B cell (primary cell): ENCODE measurements at regions of chr12 and their contacts with region 1.

Region 1: DNA sequence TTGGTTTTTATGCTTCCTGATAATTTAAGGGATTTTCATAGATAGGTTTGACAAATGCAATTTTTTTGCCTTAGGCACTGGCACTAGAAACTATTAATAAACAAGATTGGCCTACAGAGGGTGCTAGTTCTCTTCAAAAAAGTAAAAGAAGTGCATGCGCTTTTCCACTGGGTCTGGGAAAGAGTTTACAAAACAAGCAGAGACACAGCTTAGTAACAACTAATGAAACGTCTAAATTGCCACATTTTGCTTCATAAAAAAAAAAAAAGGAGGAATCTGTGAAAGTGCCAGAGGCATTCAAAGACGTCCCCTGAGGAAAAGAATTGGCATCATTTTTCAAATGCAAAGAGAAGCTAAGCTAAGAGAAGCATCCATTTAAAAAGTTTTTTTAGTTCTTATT is 58.3 kb upstream of the EEA1 start:
- DNase-seq: peak; percentile 72
- ATAC-seq: peak; percentile 37
- H3K4me3 ChIP-seq: peak overlapping the region in 4 of 5 experiments; percentile 12 to 57 (median 34)
- H3K4me3 Mint-ChIP-seq: peak overlapping the region; percentile 80
- H3K27ac ChIP-seq: peak overlapping the region; percentile 66 to 77
- H3K27ac Mint-ChIP-seq: peak overlapping the region; percentile 92
- H3K4me1 ChIP-seq: peaks cover 21 to 31% of the 10 kb centered on the region in 2 donors
- H3K4me1 Mint-ChIP-seq: peaks cover 30% of the 10 kb centered on the region
- H3K27me3 ChIP-seq: no peaks in the 10 kb centered on the region
- H3K27me3 Mint-ChIP-seq: no peaks in the 10 kb centered on the region
- CTCF ChIP-seq: peak; percentile 81

Region 2: GRCh38 chr12:92973601-92974000 is 13.8 kb before region 1 on chr12:
- CTCF ChIA-PET with region 1: interaction called, 54 read pairs
- POLR2A ChIA-PET with region 1: interaction called, 4 read pairs
- intact Hi-C with region 1: loop called (anchors 2 kb)
- DNase-seq: no peak
- ATAC-seq: no peak
- H3K4me3 ChIP-seq: no peak overlapping the region
- H3K4me3 Mint-ChIP-seq: peak overlapping the region; percentile 50
- H3K27ac ChIP-seq: no peak overlapping the region
- H3K27ac Mint-ChIP-seq: peak overlapping the region; percentile 73
- H3K4me1 ChIP-seq: peaks cover 25 to 48% of the 10 kb centered on the region in 2 donors
- H3K4me1 Mint-ChIP-seq: peaks cover 56% of the 10 kb centered on the region
- H3K27me3 ChIP-seq: no peaks in the 10 kb centered on the region
- H3K27me3 Mint-ChIP-seq: no peaks in the 10 kb centered on the region
- CTCF ChIP-seq: no peak

Region 3: DNA sequence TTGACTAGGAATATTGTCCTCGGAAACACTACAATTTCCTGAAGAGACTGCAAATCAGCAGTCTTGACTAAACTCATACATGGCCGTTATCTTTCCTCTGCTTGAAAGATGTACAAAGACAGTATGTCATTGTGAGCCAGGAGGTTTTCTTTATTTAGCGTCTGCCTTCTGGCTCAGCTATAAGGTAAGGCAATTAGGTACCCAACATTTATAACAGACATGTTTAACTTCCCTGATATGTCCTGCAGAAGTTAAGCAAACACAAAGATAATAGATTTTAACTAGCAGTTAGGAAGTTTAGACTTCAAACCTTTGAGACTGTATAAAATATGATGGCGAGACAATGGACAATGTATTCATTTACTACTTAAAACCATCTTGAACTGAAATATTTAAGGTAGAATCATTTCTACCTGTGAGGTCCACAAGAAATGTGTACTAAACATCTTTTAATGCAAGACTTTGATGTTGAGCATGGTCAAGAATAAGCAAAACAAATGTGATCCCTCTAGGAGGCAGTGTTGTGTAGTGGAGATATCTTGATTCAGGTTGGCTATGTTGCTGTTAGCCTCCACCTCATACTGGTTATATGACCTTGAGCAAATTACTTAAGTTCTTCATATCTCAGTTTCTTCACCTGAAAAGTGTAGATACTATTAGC is 37.9 kb after region 1 on chr12:
- CTCF ChIA-PET with region 1: interaction called, 4 read pairs
- POLR2A ChIA-PET with region 1: no interaction called
- intact Hi-C with region 1: loop called (anchors 5 kb)
- DNase-seq: peak; percentile 56
- ATAC-seq: peak; percentile 45
- H3K4me3 ChIP-seq: no peak overlapping the region
- H3K4me3 Mint-ChIP-seq: no peak overlapping the region
- H3K27ac ChIP-seq: no peak overlapping the region
- H3K27ac Mint-ChIP-seq: no peak overlapping the region
- H3K4me1 ChIP-seq: no peaks in the 10 kb centered on the region
- H3K4me1 Mint-ChIP-seq: no peaks in the 10 kb centered on the region
- H3K27me3 ChIP-seq: no peaks in the 10 kb centered on the region
- H3K27me3 Mint-ChIP-seq: no peaks in the 10 kb centered on the region
- CTCF ChIP-seq: peak; percentile 51

Region 4: GRCh38 chr12:93089805-93090569 is 102.6 kb after region 1 on chr12:
- CTCF ChIA-PET with region 1: no interaction called
- POLR2A ChIA-PET with region 1: no interaction called
- intact Hi-C with region 1: no loop called
- DNase-seq: no peak
- ATAC-seq: no peak
- H3K4me3 ChIP-seq: no peak overlapping the region
- H3K4me3 Mint-ChIP-seq: no peak overlapping the region
- H3K27ac ChIP-seq: no peak overlapping the region
- H3K27ac Mint-ChIP-seq: no peak overlapping the region
- H3K4me1 ChIP-seq: peaks cover 2% of the 10 kb centered on the region in 2 donors
- H3K4me1 Mint-ChIP-seq: peaks cover 3% of the 10 kb centered on the region
- H3K27me3 ChIP-seq: no peaks in the 10 kb centered on the region
- H3K27me3 Mint-ChIP-seq: no peaks in the 10 kb centered on the region
- CTCF ChIP-seq: no peak

Region 5: GRCh38 chr12:93347054-93347776 is 359.9 kb after region 1 on chr12:
- CTCF ChIA-PET with region 1: no interaction called
- POLR2A ChIA-PET with region 1: no interaction called
- intact Hi-C with region 1: no loop called
- DNase-seq: no peak
- ATAC-seq: no peak
- H3K4me3 ChIP-seq: no peak overlapping the region
- H3K4me3 Mint-ChIP-seq: no peak overlapping the region
- H3K27ac ChIP-seq: no peak overlapping the region
- H3K27ac Mint-ChIP-seq: no peak overlapping the region
- H3K4me1 ChIP-seq: no peaks in the 10 kb centered on the region
- H3K4me1 Mint-ChIP-seq: no peaks in the 10 kb centered on the region
- H3K27me3 ChIP-seq: no peaks in the 10 kb centered on the region
- H3K27me3 Mint-ChIP-seq: no peaks in the 10 kb centered on the region
- CTCF ChIP-seq: no peak

Region 6: DNA sequence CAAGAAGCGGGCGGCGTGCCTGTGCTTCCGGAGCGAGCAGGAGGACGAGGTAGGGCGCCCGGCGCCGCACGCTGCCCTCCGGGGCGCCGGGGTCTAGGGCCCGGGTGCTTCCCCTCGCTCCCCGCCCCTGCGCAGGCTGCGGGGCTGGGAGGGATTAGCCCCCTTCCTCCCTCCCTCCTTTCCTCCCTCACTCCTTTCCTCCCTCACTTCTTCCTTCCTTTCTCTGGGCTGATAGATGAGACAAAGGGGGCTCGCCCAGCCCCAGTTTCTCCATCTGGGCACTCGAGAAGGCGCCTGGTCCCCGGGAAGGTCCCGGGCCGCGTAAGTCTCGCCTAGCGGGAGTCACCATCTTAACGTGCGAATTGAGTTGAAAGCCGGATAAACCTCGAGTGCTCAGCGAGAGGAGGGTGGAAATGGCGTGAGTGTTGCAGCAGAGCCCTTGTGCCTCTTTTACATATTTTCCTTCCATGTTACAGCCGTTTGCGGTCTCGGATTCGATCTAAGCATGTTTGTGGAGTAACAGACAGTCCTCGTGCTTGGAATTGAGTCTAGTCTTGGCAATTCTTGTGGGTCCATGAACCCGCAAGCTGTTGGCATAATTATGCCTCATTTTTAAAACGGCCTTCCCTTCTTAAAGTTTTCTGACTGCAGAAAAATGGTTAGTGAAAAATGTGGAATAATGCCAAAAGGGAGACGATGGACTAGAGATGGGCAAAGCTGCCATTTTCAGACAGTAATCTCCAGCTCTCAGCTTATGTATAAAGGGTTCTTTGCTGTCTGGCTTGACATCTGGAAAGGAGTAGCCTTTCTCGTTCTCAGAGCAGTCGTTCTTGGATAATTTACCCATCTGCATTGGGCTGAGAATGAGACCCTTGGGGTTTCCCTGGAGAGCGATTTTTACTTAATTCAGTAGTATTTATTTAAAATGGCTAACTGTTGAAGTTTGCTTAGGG is 391.3 kb after region 1 on chr12:
- CTCF ChIA-PET with region 1: interaction called, 70 read pairs
- POLR2A ChIA-PET with region 1: no interaction called
- intact Hi-C with region 1: loop called (anchors 1 kb)
- DNase-seq: peak; percentile 76
- ATAC-seq: peak; percentile 44
- H3K4me3 ChIP-seq: peak overlapping the region; percentile 73 to 96 (median 86)
- H3K4me3 Mint-ChIP-seq: peak overlapping the region; percentile 98
- H3K27ac ChIP-seq: peak overlapping the region; percentile 75 to 89
- H3K27ac Mint-ChIP-seq: peak overlapping the region; percentile 98
- H3K4me1 ChIP-seq: peaks cover 20 to 29% of the 10 kb centered on the region in 2 donors
- H3K4me1 Mint-ChIP-seq: peaks cover 40% of the 10 kb centered on the region
- H3K27me3 ChIP-seq: no peaks in the 10 kb centered on the region
- H3K27me3 Mint-ChIP-seq: no peaks in the 10 kb centered on the region
- CTCF ChIP-seq: no peak

Region 7: GRCh38 chr12:93403988-93404803 is 416.8 kb after region 1 on chr12:
- CTCF ChIA-PET with region 1: interaction called, 93 read pairs
- POLR2A ChIA-PET with region 1: no interaction called
- intact Hi-C with region 1: no loop called
- DNase-seq: no peak
- ATAC-seq: no peak
- H3K4me3 ChIP-seq: no peak overlapping the region
- H3K4me3 Mint-ChIP-seq: no peak overlapping the region
- H3K27ac ChIP-seq: no peak overlapping the region
- H3K27ac Mint-ChIP-seq: peak overlapping the region; percentile 37
- H3K4me1 ChIP-seq: no peaks in the 10 kb centered on the region
- H3K4me1 Mint-ChIP-seq: no peaks in the 10 kb centered on the region
- H3K27me3 ChIP-seq: no peaks in the 10 kb centered on the region
- H3K27me3 Mint-ChIP-seq: no peaks in the 10 kb centered on the region
- CTCF ChIP-seq: no peak

Region 8: GRCh38 chr12:93502802-93503623 is 515.7 kb after region 1 on chr12:
- CTCF ChIA-PET with region 1: interaction called, 14 read pairs
- POLR2A ChIA-PET with region 1: no interaction called
- intact Hi-C with region 1: loop called (anchors 2 kb)
- DNase-seq: peak; percentile 67
- ATAC-seq: no peak
- H3K4me3 ChIP-seq: no peak overlapping the region
- H3K4me3 Mint-ChIP-seq: no peak overlapping the region
- H3K27ac ChIP-seq: no peak overlapping the region
- H3K27ac Mint-ChIP-seq: no peak overlapping the region
- H3K4me1 ChIP-seq: no peaks in the 10 kb centered on the region
- H3K4me1 Mint-ChIP-seq: peaks cover 5% of the 10 kb centered on the region
- H3K27me3 ChIP-seq: no peaks in the 10 kb centered on the region
- H3K27me3 Mint-ChIP-seq: no peaks in the 10 kb centered on the region
- CTCF ChIP-seq: peak; percentile 92